HEK293T (cell line): ENCODE measurements at regions of chr15 and their contacts with region 1.

Region 1: DNA sequence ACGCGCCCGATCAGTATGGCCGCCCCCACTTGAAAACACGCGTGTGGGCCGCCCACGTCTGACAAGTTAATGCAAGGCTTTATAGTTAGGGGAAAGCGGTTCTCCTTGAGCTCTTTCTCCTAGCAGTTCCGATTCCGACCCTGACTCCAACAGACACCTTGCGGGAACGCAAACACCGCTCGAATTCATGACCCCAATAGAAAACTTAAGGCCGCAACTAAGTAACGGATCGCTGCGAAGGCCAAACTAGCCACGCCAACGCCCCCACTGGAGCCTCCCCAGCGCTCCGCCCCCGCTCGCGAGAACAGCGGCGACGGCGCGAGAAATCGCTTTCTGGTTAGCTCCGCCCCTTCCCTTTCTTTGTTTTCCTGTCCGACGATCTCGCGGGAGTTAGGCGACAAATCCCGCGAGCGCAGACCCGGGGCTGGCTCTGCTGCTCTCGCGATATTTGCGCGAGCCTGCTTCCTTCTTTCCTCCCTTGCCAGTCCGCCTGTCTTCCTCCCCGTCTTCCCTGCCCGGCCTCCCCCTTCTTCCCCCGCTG is at the start of gene IREB2:
- DNase-seq: peak; percentile 99

Region 2: GRCh38 chr15:78093242-78094020 is 344.4 kb before region 1 on chr15:
- CTCF ChIA-PET with region 1: no interaction called
- POLR2A ChIA-PET with region 1: no interaction called
- DNase-seq: no peak

Region 3: DNA sequence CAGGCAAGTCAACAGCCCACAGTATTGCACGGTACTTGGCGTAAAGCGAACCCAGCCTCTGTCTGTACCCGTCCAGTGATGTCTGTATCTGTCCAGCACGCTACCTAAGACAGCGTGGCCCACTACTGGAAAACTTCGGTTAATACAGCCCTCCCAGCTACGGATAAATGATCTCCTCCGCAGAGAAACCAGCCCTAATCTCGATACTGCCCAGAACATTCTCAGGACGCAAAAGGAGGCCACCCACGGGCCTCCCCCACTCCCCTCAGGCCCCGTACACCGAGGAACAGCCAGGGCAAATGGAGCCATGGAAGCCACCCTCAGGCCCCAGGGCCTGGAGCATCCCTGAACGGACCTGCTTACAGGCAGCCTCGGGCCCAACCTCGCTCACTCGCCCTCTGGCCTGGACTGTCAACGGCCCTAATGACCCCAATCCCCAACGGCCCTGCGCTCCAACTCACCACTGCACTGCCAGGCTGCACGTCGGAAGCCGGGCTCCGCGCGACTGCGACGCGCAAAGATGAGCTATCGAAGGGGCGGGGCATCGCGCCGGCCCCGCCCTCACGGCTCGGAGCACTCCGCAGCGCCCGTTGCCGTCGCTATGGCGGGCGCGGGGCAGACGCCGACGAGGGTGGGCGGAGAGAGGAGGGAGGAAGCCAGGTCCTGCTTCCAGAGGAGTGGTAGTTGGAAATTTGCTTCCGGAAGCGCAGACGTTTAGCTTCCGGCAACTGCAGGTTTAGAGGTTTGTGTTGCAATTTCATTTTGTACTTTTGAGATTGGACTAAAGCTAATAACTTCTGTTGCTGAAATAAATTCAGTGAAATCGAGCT is 138.5 kb before region 1 on chr15 and contains the start of gene SKIC8:
- CTCF ChIA-PET with region 1: no interaction called
- POLR2A ChIA-PET with region 1: interaction called, 24 read pairs
- DNase-seq: peak; percentile 99

Region 4: GRCh38 chr15:78315686-78316282 is 122.0 kb before region 1 on chr15:
- CTCF ChIA-PET with region 1: no interaction called
- POLR2A ChIA-PET with region 1: interaction called, 21 read pairs
- DNase-seq: peak; percentile 66

Region 5: DNA sequence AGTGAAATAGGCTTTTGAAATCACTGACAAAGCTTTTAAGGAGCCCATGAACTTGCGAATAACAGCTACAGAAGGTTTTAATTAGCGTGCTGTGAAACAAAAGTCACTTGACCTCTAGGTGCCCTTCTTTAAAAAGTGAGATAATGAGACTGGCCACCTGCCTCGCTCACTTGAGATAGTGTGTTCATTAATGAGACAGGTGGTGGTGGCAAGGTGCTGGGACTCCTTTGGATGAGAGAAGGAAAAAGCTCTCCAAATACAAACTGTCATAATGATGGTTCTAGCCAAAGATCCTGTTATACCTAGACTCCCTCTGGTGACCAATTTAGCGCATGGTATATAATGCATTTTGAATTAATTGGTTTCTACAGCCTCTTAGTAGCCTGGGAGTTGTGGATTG is 22.5 kb before region 1 on chr15:
- CTCF ChIA-PET with region 1: interaction called, 3 read pairs
- POLR2A ChIA-PET with region 1: interaction called, 27 read pairs
- DNase-seq: peak; percentile 54

Region 6: DNA sequence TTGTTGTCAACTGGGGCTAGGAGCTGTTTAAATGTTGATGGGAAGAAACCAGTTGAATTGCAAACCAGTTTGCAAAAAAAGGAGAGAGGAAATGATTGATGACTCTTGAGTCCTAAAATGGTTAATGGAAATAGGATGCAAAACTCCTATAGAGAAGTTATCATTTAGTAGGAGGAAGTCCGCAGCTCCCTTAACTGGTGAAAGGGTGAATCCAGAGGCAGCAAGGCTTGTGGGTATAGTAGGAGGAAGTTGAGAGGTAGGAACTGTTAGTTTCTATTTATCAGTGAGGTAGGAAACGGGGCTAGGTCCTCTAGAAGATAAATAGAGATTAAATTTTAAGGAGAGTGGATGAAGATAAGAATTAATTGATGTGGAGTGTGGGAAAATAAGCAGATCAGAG is 15.6 kb after region 1 on chr15:
- CTCF ChIA-PET with region 1: interaction called, 3 read pairs
- POLR2A ChIA-PET with region 1: interaction called, 40 read pairs
- DNase-seq: no peak